GM12878 (cell line): ENCODE measurements at regions of chr9 and their contacts with region 1.

Region 1: GRCh38 chr9:1875921-1876448 is 139.2 kb upstream of the SMARCA2 start:
- DNase-seq: peak; percentile 97
- ATAC-seq: peak; percentile 79
- H3K4me3 ChIP-seq: peak overlapping the region; percentile 37
- H3K27ac ChIP-seq: peak overlapping the region; percentile 98
- H3K4me1 ChIP-seq: peaks cover 63% of the 10 kb centered on the region
- H3K27me3 ChIP-seq: no peaks in the 10 kb centered on the region
- CTCF ChIP-seq: no peak
- EP300 ChIP-seq: peak; percentile 90 to 97
- POLR2A ChIP-seq: peak; percentile 67
- RAD21 ChIP-seq: peak; percentile 38

Region 2: GRCh38 chr9:1890816-1891215 is 14.8 kb after region 1 on chr9:
- CTCF ChIA-PET with region 1: interaction called, 3 read pairs
- POLR2A ChIA-PET with region 1: interaction called, 5 read pairs
- RAD21 ChIA-PET with region 1: interaction called, 4 read pairs
- SMC1A ChIA-PET with region 1: interaction called, 11 read pairs
- in situ Hi-C with region 1: no loop called
- intact Hi-C with region 1: no loop called
- DNase-seq: no peak
- ATAC-seq: no peak
- H3K4me3 ChIP-seq: no peak overlapping the region
- H3K27ac ChIP-seq: no peak overlapping the region
- H3K4me1 ChIP-seq: no peaks in the 10 kb centered on the region
- H3K27me3 ChIP-seq: no peaks in the 10 kb centered on the region
- CTCF ChIP-seq: no peak
- EP300 ChIP-seq: no peak
- POLR2A ChIP-seq: no peak
- RAD21 ChIP-seq: no peak

Region 3: DNA sequence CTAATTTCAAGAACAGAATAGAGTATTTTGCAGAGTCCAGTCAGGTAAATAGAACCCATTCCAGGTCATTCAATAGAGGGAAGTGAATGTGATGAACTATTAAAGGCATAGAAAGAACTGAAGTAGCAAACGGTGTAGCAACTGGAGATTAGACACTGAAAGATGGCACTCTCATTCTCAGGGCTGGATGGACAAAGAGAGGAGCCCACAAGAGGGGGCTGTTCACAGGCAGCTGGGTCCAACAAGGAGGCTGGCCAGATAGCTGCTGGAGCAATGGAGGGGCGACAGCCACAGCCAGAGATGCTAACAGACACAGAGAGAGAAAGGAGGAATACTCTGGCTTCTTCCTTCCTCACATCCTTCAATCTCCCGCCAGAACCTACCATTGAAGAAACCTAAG is 46.0 kb after region 1 on chr9:
- CTCF ChIA-PET with region 1: interaction called, 15 read pairs
- POLR2A ChIA-PET with region 1: interaction called, 3 read pairs
- RAD21 ChIA-PET with region 1: interaction called, 19 read pairs
- SMC1A ChIA-PET with region 1: interaction called, 58 read pairs
- in situ Hi-C with region 1: no loop called
- intact Hi-C with region 1: no loop called
- DNase-seq: no peak
- ATAC-seq: peak; percentile 57
- H3K4me3 ChIP-seq: no peak overlapping the region
- H3K27ac ChIP-seq: no peak overlapping the region; the same call in 1 of the 2 replicates
- H3K4me1 ChIP-seq: peaks cover 3% of the 10 kb centered on the region
- H3K27me3 ChIP-seq: no peaks in the 10 kb centered on the region
- CTCF ChIP-seq: 0 out of 6 replicates have a peak, but pooled peaks of 2 of the 3 experiments have one; percentile 7 to 10
- EP300 ChIP-seq: no peak
- POLR2A ChIP-seq: no peak
- RAD21 ChIP-seq: peak; percentile 35

Region 4: GRCh38 chr9:2014696-2015580 is 139.0 kb after region 1 on chr9 and contains the start of gene SMARCA2:
- CTCF ChIA-PET with region 1: interaction called, 3 read pairs
- POLR2A ChIA-PET with region 1: interaction called, 5 read pairs
- RAD21 ChIA-PET with region 1: interaction called, 3 read pairs
- SMC1A ChIA-PET with region 1: interaction called, 8 read pairs
- in situ Hi-C with region 1: loop called (anchors 5 kb)
- intact Hi-C with region 1: loop called (anchors 1 kb)
- DNase-seq: peak; percentile 86
- ATAC-seq: peak; percentile 81
- H3K4me3 ChIP-seq: peak within 1 kb of the TSS; percentile 95
- H3K27ac ChIP-seq: peak within 1 kb of the TSS; percentile 91
- H3K4me1 ChIP-seq: peaks cover 17% of the 10 kb centered on the region; the same call in 1 of the 2 replicates
- H3K27me3 ChIP-seq: no peaks in the 10 kb centered on the region
- CTCF ChIP-seq: no peak
- EP300 ChIP-seq: 0 out of 4 replicates have a peak, but pooled peaks of 1 of the 2 experiments have one; percentile 16
- POLR2A ChIP-seq: peak; percentile 98
- RAD21 ChIP-seq: no peak
- polyA plus RNA-seq, gene SMARCA2: 100 to 130 TPM

Region 5: GRCh38 chr9:2087500-2088313 is 211.7 kb after region 1 on chr9:
- CTCF ChIA-PET with region 1: interaction called, 4 read pairs
- POLR2A ChIA-PET with region 1: interaction called, 4 read pairs
- RAD21 ChIA-PET with region 1: interaction called, 3 read pairs
- SMC1A ChIA-PET with region 1: interaction called, 12 read pairs
- in situ Hi-C with region 1: no loop called
- intact Hi-C with region 1: loop called (anchors 1 kb)
- DNase-seq: peak; percentile 45
- ATAC-seq: peak; percentile 91
- H3K4me3 ChIP-seq: no peak overlapping the region
- H3K27ac ChIP-seq: peak overlapping the region; percentile 38
- H3K4me1 ChIP-seq: peaks cover 4% of the 10 kb centered on the region; the same call in 1 of the 2 replicates
- H3K27me3 ChIP-seq: no peaks in the 10 kb centered on the region
- CTCF ChIP-seq: peak; percentile 60 to 68 (median 65)
- EP300 ChIP-seq: no peak
- POLR2A ChIP-seq: no peak
- RAD21 ChIP-seq: peak; percentile 68